ENCODE measurements at regions of chr15 and their contacts with region 1.

Region 1: GRCh38 chr15:42286445-42287029 is 13.3 kb upstream of the TMEM87A start:
- DNase-seq: no peak
- ATAC-seq: no peak
- H3K4me3 ChIP-seq: no peak overlapping the region
- H3K27ac ChIP-seq: no peak overlapping the region
- H3K4me1 ChIP-seq: no peaks in the 10 kb centered on the region
- H3K27me3 ChIP-seq: no peaks in the 10 kb centered on the region
- CTCF ChIP-seq: no peak
- POLR2A ChIP-seq: no peak

Region 2: DNA sequence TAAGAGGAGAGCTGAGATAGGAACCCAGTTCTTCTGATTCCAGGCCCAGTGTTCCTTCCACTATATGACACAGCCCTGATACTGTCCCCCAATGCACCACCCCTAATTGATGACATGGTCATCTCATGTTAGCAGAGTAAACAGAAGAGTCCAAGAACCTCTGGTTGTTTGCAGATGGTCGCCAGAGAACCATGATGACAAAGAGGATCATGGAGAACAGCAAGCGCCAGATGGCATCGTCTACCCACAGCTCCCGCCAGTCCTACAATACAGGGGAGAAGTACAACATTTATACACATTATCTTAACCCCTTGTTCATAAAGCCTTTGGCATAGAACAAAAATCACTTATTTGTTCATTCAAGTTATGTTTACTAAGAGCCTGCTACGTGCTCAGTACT is 59.9 kb before region 1 on chr15:
- intact Hi-C with region 1: no loop called
- DNase-seq: no peak
- ATAC-seq: no peak
- H3K4me3 ChIP-seq: no peak overlapping the region
- H3K27ac ChIP-seq: no peak overlapping the region
- H3K4me1 ChIP-seq: no peaks in the 10 kb centered on the region
- H3K27me3 ChIP-seq: no peaks in the 10 kb centered on the region
- CTCF ChIP-seq: no peak
- POLR2A ChIP-seq: no peak

Region 3: DNA sequence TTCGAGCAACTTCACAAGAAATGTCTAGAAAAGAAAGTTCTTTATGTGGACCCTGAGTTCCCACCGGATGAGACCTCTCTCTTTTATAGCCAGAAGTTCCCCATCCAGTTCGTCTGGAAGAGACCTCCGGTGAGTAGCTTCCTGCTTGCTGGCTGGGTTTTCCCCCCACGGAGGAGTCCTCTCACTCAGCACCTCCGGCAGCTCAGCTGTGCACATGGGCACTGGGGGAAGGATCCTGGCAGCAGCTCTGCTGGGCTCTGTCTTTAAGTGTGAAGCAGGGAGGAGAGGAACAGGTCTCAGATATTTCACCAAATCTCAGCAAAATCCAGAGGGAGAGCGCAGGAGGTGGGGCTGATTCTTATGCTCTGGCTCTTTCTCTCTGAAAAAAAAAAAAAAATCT is 73.4 kb after region 1 on chr15:
- intact Hi-C with region 1: loop called in 1 of 10 experiments (anchors 10 kb)
- DNase-seq: no peak
- ATAC-seq: peak; percentile 18 to 69 (median 58)
- H3K4me3 ChIP-seq: peak overlapping the region in 1 of 12 donors; percentile 15
- H3K27ac ChIP-seq: peak overlapping the region in 3 of 12 donors; percentile 13 to 34 (median 33)
- H3K4me1 ChIP-seq: peaks cover 0 to 14% (median 0%) of the 10 kb centered on the region in 12 donors
- H3K27me3 ChIP-seq: no peaks in the 10 kb centered on the region
- CTCF ChIP-seq: no peak
- POLR2A ChIP-seq: no peak

Region 4: GRCh38 chr15:42371125-42371524 is 84.6 kb after region 1 on chr15:
- intact Hi-C with region 1: loop called in 1 of 10 experiments (anchors 10 kb)
- DNase-seq: no peak
- ATAC-seq: no peak
- H3K4me3 ChIP-seq: no peak overlapping the region
- H3K27ac ChIP-seq: no peak overlapping the region
- H3K4me1 ChIP-seq: peaks cover 0 to 9% (median 0%) of the 10 kb centered on the region in 12 donors
- H3K27me3 ChIP-seq: no peaks in the 10 kb centered on the region
- CTCF ChIP-seq: no peak
- POLR2A ChIP-seq: no peak